PC-9 (cell line): ENCODE measurements at regions of chr9 and their contacts with region 1.

Region 1: DNA sequence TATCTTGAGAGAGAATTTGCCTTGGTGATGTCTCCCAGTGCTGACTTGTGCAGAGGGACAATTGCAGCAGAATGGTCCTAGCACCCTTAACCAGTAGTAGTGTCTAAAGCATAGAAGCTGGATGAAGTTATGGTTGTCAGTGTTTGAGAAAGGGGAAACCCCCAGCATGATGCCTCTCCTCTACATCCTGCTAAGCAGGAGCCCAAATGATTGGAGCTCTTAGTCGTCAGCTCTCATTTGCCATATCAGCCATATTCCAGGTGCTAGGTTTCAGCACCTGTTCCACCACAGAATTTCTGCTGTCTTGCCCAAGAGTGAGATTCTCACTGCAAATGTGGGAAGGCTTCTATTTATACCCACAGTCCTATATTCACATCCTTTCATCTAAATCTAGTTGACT is 43.7 kb upstream of the RFX3 start:
- DNase-seq: no peak
- H3K4me3 ChIP-seq: no peak overlapping the region
- H3K27ac ChIP-seq: no peak overlapping the region
- H3K4me1 ChIP-seq: no peaks in the 10 kb centered on the region
- H3K27me3 ChIP-seq: no peaks in the 10 kb centered on the region
- CTCF ChIP-seq: no peak

Region 2: DNA sequence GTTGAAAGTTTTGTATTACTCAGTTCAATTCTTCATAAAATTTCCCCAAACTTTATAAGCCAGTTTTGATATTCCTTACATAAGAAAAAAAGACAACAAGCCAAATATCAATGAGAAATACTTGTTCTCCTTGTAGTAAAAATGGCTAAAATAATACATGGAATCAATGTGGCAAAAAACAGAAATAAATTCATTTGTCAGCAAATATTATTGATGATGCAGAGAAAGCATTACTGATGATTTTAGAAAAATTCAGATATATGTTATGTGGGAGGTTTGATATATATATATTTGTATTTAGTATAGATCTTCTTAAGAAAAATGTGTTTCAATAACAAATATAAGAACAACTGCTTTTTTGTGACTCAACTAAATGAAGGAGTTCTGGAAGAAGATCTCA is 598.7 kb before region 1 on chr9:
- CTCF ChIA-PET with region 1: no interaction called
- POLR2A ChIA-PET with region 1: no interaction called
- intact Hi-C with region 1: loop called (anchors 5 kb)
- DNase-seq: no peak
- H3K4me3 ChIP-seq: no peak overlapping the region
- H3K27ac ChIP-seq: no peak overlapping the region
- H3K4me1 ChIP-seq: no peaks in the 10 kb centered on the region
- H3K27me3 ChIP-seq: no peaks in the 10 kb centered on the region
- CTCF ChIP-seq: no peak